HEK293 (cell line): ENCODE measurements at regions of chr17 and their contacts with region 1.

Region 1: GRCh38 chr17:20206068-20206467 is 196.9 kb downstream of the SPECC1 start:
- H3K4me3 ChIP-seq: no peak overlapping the region
- H3K27ac ChIP-seq: no peak overlapping the region
- H3K4me1 ChIP-seq: peaks cover 9% of the 10 kb centered on the region; the same call in 1 of the 2 replicates
- CTCF ChIP-seq: no peak

Region 2: DNA sequence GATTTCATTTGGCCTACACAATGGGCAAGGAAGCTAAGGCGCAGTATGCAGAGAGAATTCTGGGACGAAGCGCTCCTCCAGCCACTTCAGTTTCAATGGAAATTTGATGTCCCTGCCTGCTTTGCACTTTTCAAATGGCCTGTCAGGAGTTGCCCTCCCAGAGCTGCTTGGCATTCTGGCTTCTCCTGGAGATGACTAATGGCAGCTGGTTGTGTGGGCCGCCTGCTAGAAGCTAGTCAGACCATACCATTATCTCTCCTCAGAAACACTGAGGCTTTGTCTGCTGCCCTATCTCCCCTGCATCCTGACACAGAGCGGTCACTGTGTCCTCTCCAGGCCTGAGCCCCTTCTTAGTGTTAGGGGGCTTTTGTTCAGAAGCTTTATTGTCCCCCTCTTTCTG is 16.8 kb before region 1 on chr17:
- CTCF ChIA-PET with region 1: interaction called, 10 read pairs
- POLR2A ChIA-PET with region 1: no interaction called
- H3K4me3 ChIP-seq: no peak overlapping the region
- H3K27ac ChIP-seq: no peak overlapping the region
- H3K4me1 ChIP-seq: peaks cover 13% of the 10 kb centered on the region
- CTCF ChIP-seq: no peak